ENCODE measurements at regions of chr13 and their contacts with region 1.

Region 1: GRCh38 chr13:23888658-23889614 is at the start of gene MIPEP:
- DNase-seq: peak; percentile 67
- H3K4me3 ChIP-seq: peak within 1 kb of the TSS; percentile 95
- H3K27me3 ChIP-seq: no peaks in the 10 kb centered on the region
- CTCF ChIP-seq: peak; percentile 86
- polyA plus RNA-seq, gene MIPEP: 10.9 and 12.4 TPM in 2 replicates

Region 2: GRCh38 chr13:23876265-23876664 is 12.7 kb before region 1 on chr13:
- CTCF ChIA-PET with region 1: interaction called, 10 read pairs
- POLR2A ChIA-PET with region 1: no interaction called
- DNase-seq: no peak
- H3K4me3 ChIP-seq: no peak overlapping the region
- H3K27me3 ChIP-seq: no peaks in the 10 kb centered on the region
- CTCF ChIP-seq: peak; percentile 50

Region 3: DNA sequence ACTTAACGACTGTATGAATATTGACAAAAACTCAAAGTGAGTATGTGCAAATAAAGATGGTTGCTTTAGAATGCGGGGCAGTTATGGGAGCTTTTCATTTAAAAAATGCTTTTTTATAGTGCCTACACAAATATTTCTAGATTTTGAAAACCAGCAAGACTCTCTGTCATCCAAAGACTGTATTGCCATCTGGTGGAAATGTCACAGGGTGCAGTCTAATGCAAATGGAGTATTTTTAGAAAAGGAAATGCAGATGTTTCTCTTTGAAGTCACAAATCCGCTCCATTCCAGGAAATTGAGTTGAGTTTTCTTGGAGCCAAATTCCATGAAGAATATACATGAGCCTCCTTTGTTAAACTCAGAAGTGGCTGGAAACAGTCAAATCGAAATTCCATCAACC is 10.6 kb after region 1 on chr13:
- CTCF ChIA-PET with region 1: interaction called, 12 read pairs
- POLR2A ChIA-PET with region 1: no interaction called
- DNase-seq: no peak
- H3K4me3 ChIP-seq: no peak overlapping the region
- H3K27me3 ChIP-seq: peaks cover 2% of the 10 kb centered on the region; the same call in 1 of the 2 replicates
- CTCF ChIP-seq: peak; percentile 57